Activated CD4-positive, alpha-beta T cell treated with anti-CD3 and anti-CD28 coated beads for 36 hours (primary cell): ENCODE measurements at regions of chr10 and their contacts with region 1.

Region 1: DNA sequence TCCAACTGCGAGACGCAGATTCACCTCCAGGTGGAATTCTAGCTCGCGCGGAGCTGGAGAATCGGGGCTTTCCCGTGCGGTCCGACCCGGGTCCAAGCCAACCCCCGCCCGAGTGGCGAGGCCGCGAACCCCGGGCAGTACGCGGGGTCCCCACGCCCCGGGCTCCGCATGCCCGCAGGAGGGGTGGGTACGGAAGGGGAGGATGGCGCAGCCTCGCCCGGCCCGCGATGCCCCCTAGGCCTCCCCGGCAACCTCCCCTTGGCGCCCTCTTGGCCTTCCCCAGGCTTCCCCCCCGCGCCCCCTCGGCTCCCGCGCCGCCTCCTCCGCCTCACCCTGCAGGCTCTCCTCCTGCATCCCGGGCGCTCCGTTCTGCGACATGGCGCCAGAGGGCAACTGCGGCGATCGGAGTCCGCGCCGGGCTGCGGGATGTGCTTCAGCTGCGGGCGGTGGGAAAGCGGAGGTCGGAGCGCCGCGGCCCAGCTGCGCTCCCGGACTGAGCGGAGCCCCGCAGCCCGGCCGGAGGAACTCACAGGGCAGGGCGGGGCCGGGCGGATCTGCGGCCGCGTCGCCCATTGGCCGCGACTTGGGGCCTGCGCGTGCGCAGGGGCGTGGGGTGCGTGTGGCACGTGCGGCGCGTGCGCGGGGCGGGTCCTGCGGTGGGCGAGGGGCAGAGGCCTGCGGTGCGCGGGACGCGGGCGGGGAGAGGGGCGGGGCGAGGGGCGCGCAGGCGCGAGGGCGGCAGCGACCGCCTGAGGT is at the start of gene BNIP3:
- DNase-seq: peak; percentile 97
- ATAC-seq: peak; percentile 90
- H3K4me3 Mint-ChIP-seq: peak within 1 kb of the TSS; percentile 90
- H3K27ac Mint-ChIP-seq: peak within 1 kb of the TSS; percentile 79
- H3K4me1 Mint-ChIP-seq: peaks cover 36% of the 10 kb centered on the region
- H3K27me3 Mint-ChIP-seq: no peaks in the 10 kb centered on the region
- total RNA-seq, gene BNIP3: 200 to 256 TPM

Region 2: GRCh38 chr10:131874991-131875451 is 106.6 kb before region 1 on chr10:
- CTCF ChIA-PET with region 1: no interaction called
- POLR2A ChIA-PET with region 1: no interaction called
- intact Hi-C with region 1: no loop called
- DNase-seq: peak; percentile 86
- ATAC-seq: peak; percentile 86
- H3K4me3 Mint-ChIP-seq: no peak overlapping the region
- H3K27ac Mint-ChIP-seq: no peak overlapping the region
- H3K4me1 Mint-ChIP-seq: no peaks in the 10 kb centered on the region
- H3K27me3 Mint-ChIP-seq: peaks cover 13% of the 10 kb centered on the region

Region 3: GRCh38 chr10:131900350-131901146 is 81.1 kb before region 1 on chr10 and contains the start of gene PPP2R2D:
- CTCF ChIA-PET with region 1: interaction called, 3 read pairs
- POLR2A ChIA-PET with region 1: no interaction called
- intact Hi-C with region 1: loop called (anchors 1 kb)
- DNase-seq: peak; percentile 97
- ATAC-seq: peak; percentile 83
- H3K4me3 Mint-ChIP-seq: peak within 1 kb of the TSS; percentile 93
- H3K27ac Mint-ChIP-seq: peak within 1 kb of the TSS; percentile 92
- H3K4me1 Mint-ChIP-seq: peaks cover 53% of the 10 kb centered on the region
- H3K27me3 Mint-ChIP-seq: peaks cover 7% of the 10 kb centered on the region
- total RNA-seq, gene PPP2R2D: 30.0 to 39.3 TPM

Region 4: DNA sequence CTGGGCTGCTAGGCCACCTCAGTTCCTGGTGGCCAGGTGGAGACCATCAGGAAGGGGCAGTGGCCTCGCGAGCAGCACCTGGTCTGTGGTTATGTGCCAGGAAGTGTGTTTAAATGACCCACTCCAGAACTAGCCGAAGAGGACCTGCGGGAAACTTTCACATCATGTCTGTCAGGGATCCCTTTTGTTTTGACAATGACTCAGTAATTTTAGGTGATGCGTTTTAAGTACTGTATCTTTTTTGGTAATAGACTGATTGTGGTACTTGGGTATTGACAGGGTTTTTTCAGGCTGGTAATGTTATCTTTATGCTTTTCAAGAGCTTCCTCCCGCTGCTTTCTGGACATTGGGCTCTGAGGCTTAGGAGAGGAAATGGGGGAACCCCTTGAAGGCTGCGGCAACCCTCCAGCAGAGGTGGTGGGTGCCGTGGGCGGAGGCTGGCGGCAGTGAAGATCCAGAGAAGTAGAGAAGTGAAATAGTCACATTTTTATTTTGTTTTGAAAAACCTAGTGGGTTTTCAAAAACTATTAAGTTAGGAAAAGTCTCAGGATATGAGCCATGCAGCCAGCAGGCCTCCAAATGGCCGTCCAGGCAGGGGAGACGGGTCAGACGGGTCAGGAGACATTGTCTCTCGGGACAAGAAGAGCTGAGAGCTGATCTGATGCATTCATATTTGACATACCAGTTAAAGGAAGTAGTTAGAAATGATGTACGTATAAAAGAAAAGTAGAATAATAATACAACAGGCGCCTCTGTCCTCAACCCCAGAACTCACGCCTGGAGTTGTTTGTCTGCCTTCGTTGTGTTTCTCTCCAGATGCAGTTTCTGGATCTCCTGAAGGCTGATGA is 53.1 kb before region 1 on chr10:
- CTCF ChIA-PET with region 1: no interaction called
- POLR2A ChIA-PET with region 1: no interaction called
- intact Hi-C with region 1: loop called in 1 of 2 experiments (anchors 5 kb)
- DNase-seq: peak; percentile 80
- ATAC-seq: peak; percentile 87
- H3K4me3 Mint-ChIP-seq: peak overlapping the region; percentile 29
- H3K27ac Mint-ChIP-seq: peak overlapping the region; percentile 87
- H3K4me1 Mint-ChIP-seq: peaks cover 82% of the 10 kb centered on the region
- H3K27me3 Mint-ChIP-seq: no peaks in the 10 kb centered on the region

Region 5: DNA sequence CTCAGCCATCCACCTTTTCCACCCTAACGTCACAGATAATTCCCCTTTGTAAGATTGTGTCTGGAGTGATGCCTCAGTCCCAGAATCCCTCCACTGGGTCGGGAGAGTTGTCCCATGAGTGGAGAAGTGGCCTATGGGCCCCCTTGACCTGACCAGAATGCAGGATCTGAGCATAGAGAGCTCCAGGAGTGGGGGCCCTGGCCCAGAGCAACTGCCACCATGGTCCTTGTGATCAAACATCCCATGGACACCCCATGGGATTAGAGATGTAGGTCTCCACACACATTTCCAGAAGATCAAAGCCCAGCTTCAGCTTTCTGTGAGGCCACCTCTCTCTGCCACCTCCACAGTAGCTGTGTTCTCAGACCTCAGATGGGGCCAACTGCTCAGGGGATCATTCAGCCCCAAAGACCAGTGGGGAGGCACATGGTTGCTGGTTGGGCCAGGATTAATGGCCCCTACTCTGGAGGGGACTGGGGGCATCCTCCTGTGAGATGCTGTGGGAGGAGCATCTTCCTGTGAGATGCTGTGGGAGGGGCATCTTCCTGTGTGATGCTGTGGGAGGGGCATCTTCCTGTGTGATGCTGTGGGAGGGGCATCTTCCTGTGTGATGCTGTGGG is 176.6 kb after region 1 on chr10:
- CTCF ChIA-PET with region 1: no interaction called
- POLR2A ChIA-PET with region 1: no interaction called
- intact Hi-C with region 1: loop called in 1 of 2 experiments (anchors 2 kb)
- DNase-seq: peak; percentile 57
- ATAC-seq: peak; percentile 56
- H3K4me3 Mint-ChIP-seq: no peak overlapping the region
- H3K27ac Mint-ChIP-seq: peak overlapping the region; percentile 82
- H3K4me1 Mint-ChIP-seq: peaks cover 22% of the 10 kb centered on the region
- H3K27me3 Mint-ChIP-seq: no peaks in the 10 kb centered on the region